Endothelial cell of umbilical vein (primary cell): ENCODE measurements at regions of chr20 and their contacts with region 1.

Region 1: GRCh38 chr20:24160563-24161375 is 172.2 kb upstream of the GGTLC1 start:
- DNase-seq: peak; percentile 58
- H3K4me3 ChIP-seq: no peak overlapping the region
- H3K27ac ChIP-seq: no peak overlapping the region
- H3K4me1 ChIP-seq: peaks cover 14% of the 10 kb centered on the region
- H3K27me3 ChIP-seq: peaks cover 2 to 4% of the 10 kb centered on the region in 2 experiments
- CTCF ChIP-seq: peak; percentile 72 to 86
- POLR2A ChIP-seq: no peak

Region 2: DNA sequence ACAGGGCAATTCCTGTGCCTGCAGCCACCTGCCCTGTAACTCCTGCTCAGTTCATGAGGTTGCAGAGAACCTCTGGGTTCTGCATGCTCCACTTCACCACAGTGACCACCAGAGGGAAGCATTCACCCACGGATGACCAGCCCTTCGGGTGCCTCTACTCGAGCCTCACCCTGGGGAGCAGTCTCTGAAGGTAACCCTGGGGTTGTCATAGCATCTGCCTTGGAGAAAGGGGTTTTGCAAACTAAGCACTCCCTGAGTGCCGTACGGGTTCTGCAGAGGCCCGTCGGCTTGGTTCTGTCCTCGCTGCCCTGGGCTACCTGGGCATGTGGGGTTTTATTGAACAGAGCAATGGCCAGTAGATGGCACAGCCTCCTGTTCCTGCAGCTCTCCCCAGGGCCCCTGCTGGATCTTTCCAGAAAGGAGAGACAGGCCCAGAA is 271.0 kb before region 1 on chr20:
- CTCF ChIA-PET with region 1: no interaction called
- POLR2A ChIA-PET with region 1: no interaction called
- dilution Hi-C with region 1: no loop called
- intact Hi-C with region 1: loop called (anchors 1 kb)
- DNase-seq: peak; percentile 42
- H3K4me3 ChIP-seq: no peak overlapping the region
- H3K27ac ChIP-seq: no peak overlapping the region
- H3K4me1 ChIP-seq: no peaks in the 10 kb centered on the region
- H3K27me3 ChIP-seq: no peaks in the 10 kb centered on the region
- CTCF ChIP-seq: peak; percentile 63 to 73
- POLR2A ChIP-seq: no peak

Region 3: GRCh38 chr20:23995905-23996666 is 164.7 kb before region 1 on chr20:
- CTCF ChIA-PET with region 1: interaction called, 3 read pairs
- POLR2A ChIA-PET with region 1: no interaction called
- dilution Hi-C with region 1: no loop called
- intact Hi-C with region 1: loop called (anchors 1 kb)
- DNase-seq: peak; percentile 24
- H3K4me3 ChIP-seq: no peak overlapping the region
- H3K27ac ChIP-seq: no peak overlapping the region
- H3K4me1 ChIP-seq: no peaks in the 10 kb centered on the region
- H3K27me3 ChIP-seq: peaks cover 2 to 6% of the 10 kb centered on the region in 2 experiments
- CTCF ChIP-seq: peak; percentile 55 to 59
- POLR2A ChIP-seq: no peak

Region 4: GRCh38 chr20:24118441-24119175 is 42.2 kb before region 1 on chr20:
- CTCF ChIA-PET with region 1: interaction called, 17 read pairs
- POLR2A ChIA-PET with region 1: no interaction called
- dilution Hi-C with region 1: no loop called
- intact Hi-C with region 1: loop called (anchors 5 kb)
- DNase-seq: peak; percentile 90
- H3K4me3 ChIP-seq: no peak overlapping the region
- H3K27ac ChIP-seq: peak overlapping the region; percentile 27
- H3K4me1 ChIP-seq: peaks cover 41% of the 10 kb centered on the region
- H3K27me3 ChIP-seq: no peaks in the 10 kb centered on the region
- CTCF ChIP-seq: no peak
- POLR2A ChIP-seq: no peak